ENCODE measurements at regions of chr12 and their contacts with region 1.

Region 1: DNA sequence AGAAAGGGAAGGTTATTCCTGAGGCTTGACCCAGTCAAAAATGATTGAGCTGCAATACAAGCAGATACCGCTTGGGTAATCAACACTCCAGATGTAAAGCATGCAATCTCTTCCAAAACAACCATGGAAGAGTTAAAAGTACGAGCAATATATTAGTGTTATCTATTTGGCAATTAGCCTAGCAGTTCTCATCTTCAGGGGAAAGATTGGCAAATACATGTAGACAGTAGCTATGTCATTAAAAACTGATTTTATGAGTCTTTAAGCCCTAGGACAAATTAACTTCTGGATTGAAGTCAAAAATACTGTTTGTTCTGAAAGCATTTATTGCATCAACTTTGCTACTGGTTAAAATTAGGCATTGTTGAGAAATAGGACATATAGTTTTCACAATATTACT is 9.3 kb upstream of the GYS2 start:
- DNase-seq: no peak
- ATAC-seq: peak; percentile 60 to 83 (median 72)
- H3K4me3 ChIP-seq: no peak overlapping the region
- H3K27ac ChIP-seq: no peak overlapping the region
- H3K4me1 ChIP-seq: peaks cover 0 to 20% (median 0%) of the 10 kb centered on the region in 4 donors
- H3K27me3 ChIP-seq: no peaks in the 10 kb centered on the region
- CTCF ChIP-seq: peak; percentile 29 to 50 (median 36)
- POLR2A ChIP-seq: no peak

Region 2: DNA sequence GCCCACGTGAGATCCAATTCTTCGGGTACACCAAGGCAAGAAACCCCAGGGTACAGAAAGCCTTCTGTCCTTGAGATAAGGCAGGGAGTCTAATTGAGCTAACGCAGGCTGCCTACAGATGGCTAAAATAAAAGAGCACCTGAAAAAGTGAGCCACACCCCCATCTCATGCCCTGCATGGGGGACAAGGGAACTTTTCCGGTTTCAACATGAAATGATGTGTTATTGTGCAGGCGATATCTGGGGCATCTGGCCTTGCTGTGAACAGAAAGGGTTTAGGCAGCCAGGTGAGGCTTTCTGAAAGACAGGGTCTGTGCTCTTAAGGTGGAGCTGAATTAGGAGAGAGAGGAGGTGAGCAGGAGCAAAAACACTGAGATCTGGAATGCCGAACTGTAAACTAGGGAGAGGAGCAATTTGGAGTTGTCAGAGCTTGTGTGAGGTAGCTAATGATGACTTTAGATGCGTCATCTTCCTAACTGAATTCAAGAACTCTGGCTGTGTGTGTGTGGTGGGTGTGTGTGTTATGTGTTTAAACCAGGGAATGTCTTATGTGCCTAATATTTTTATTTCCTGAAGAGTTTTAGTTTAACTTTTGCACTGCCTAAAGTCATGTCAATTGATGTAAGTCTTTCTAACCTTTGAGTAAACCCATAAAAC is 63.8 kb after region 1 on chr12:
- intact Hi-C with region 1: loop called in 1 of 2 experiments (anchors 10 kb)
- DNase-seq: no peak
- ATAC-seq: no peak
- H3K4me3 ChIP-seq: no peak overlapping the region
- H3K27ac ChIP-seq: no peak overlapping the region
- H3K4me1 ChIP-seq: peaks cover 0 to 2% (median 0%) of the 10 kb centered on the region in 4 donors
- H3K27me3 ChIP-seq: no peaks in the 10 kb centered on the region
- CTCF ChIP-seq: no peak
- POLR2A ChIP-seq: no peak

Measured in right lobe of liver (tissue), 6 donors.